Right cardiac atrium (tissue), 5 donors: ENCODE measurements at regions of chr21 and their contacts with region 1.

Region 1: DNA sequence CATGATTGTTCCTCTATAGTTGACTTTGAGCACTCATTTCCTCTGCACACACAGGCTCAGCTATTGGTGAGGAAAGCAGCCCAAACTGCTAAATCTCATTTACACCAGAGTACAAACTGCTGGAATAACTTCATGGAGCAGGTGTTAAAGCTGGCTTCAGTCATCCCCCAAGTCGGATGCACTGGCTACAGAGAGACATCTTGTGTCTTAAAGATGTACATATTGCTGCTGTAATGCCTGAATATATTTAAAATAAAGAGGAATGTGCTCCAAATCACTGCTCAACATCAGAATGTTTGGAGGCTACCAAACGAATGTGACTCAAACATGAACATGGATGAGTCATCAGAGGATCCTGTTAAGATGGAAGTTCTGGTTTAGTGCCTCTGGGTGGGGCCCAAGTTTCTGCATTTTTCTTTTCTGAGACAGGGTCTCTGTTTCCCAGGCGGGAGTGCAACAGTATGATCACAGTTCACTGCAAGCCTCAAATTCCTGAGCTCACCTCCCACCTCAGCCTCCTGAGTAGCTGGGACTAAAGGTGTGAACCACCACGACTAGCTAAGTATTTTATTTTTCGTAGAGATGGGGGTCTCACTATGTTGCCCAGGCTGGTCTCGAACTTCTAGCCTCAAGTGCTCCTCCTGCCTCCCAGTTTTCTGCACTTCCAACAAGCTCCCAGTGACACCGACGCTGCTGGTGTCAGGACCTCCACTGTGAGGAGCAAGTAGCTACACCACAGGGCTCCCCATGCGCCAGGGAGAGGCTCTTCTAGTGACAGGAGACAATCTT is 79.0 kb upstream of the KRTAP19-8 start:
- DNase-seq: no peak
- ATAC-seq: peak; percentile 32 to 44
- H3K4me3 ChIP-seq: no peak overlapping the region
- H3K27ac ChIP-seq: no peak overlapping the region
- H3K4me1 ChIP-seq: no peaks in the 10 kb centered on the region
- H3K27me3 ChIP-seq: no peaks in the 10 kb centered on the region

Region 2: GRCh38 chr21:31161157-31161556 is 43.8 kb after region 1 on chr21:
- intact Hi-C with region 1: loop called in 1 of 4 experiments (anchors 10 kb)
- DNase-seq: peak in 1 of 3 donors; percentile 53
- ATAC-seq: peak in 1 of 2 donors; percentile 54
- H3K4me3 ChIP-seq: no peak overlapping the region
- H3K27ac ChIP-seq: no peak overlapping the region
- H3K4me1 ChIP-seq: no peaks in the 10 kb centered on the region
- H3K27me3 ChIP-seq: no peaks in the 10 kb centered on the region